ENCODE measurements at regions of chr5 and their contacts with region 1.

Region 1: GRCh38 chr5:150409638-150410523 is 2.8 kb downstream of the CD74 start:
- DNase-seq: peak; percentile 70
- H3K4me3 Mint-ChIP-seq: peak overlapping the region; percentile 98
- H3K27ac Mint-ChIP-seq: peak overlapping the region; percentile 98
- H3K4me1 Mint-ChIP-seq: peaks cover 39% of the 10 kb centered on the region
- H3K27me3 Mint-ChIP-seq: no peaks in the 10 kb centered on the region

Region 2: GRCh38 chr5:149731639-149732323 is 678.1 kb before region 1 on chr5:
- CTCF ChIA-PET with region 1: no interaction called
- intact Hi-C with region 1: loop called (anchors 2 kb)
- DNase-seq: peak; percentile 90
- H3K4me3 Mint-ChIP-seq: peak overlapping the region; percentile 81
- H3K27ac Mint-ChIP-seq: peak overlapping the region; percentile 56
- H3K4me1 Mint-ChIP-seq: peaks cover 4% of the 10 kb centered on the region
- H3K27me3 Mint-ChIP-seq: no peaks in the 10 kb centered on the region

Region 3: GRCh38 chr5:150357326-150358260 is 52.3 kb before region 1 on chr5 and contains the start of gene TCOF1:
- CTCF ChIA-PET with region 1: no interaction called
- intact Hi-C with region 1: loop called (anchors 1 kb)
- DNase-seq: peak; percentile 98
- H3K4me3 Mint-ChIP-seq: peak within 1 kb of the TSS; percentile 87
- H3K27ac Mint-ChIP-seq: peak within 1 kb of the TSS; percentile 82
- H3K4me1 Mint-ChIP-seq: peaks cover 41% of the 10 kb centered on the region
- H3K27me3 Mint-ChIP-seq: no peaks in the 10 kb centered on the region
- total RNA-seq, gene TCOF1: 114 to 115 TPM

Region 4: GRCh38 chr5:150449517-150450339 is 39.8 kb after region 1 on chr5 and contains the start of gene RPS14:
- CTCF ChIA-PET with region 1: interaction called, 3 read pairs
- intact Hi-C with region 1: loop called (anchors 1 kb)
- DNase-seq: peak; percentile 97
- H3K4me3 Mint-ChIP-seq: peak within 1 kb of the TSS; percentile 93
- H3K27ac Mint-ChIP-seq: peak within 1 kb of the TSS; percentile 99
- H3K4me1 Mint-ChIP-seq: peaks cover 33% of the 10 kb centered on the region
- H3K27me3 Mint-ChIP-seq: no peaks in the 10 kb centered on the region
- total RNA-seq, gene RPS14: 4,594 to 4,738 TPM

Region 5: GRCh38 chr5:150774145-150774544 is 364.3 kb after region 1 on chr5:
- CTCF ChIA-PET with region 1: no interaction called
- intact Hi-C with region 1: no loop called
- DNase-seq: no peak
- H3K4me3 Mint-ChIP-seq: no peak overlapping the region
- H3K27ac Mint-ChIP-seq: no peak overlapping the region
- H3K4me1 Mint-ChIP-seq: peaks cover 9% of the 10 kb centered on the region
- H3K27me3 Mint-ChIP-seq: no peaks in the 10 kb centered on the region

Region 6: DNA sequence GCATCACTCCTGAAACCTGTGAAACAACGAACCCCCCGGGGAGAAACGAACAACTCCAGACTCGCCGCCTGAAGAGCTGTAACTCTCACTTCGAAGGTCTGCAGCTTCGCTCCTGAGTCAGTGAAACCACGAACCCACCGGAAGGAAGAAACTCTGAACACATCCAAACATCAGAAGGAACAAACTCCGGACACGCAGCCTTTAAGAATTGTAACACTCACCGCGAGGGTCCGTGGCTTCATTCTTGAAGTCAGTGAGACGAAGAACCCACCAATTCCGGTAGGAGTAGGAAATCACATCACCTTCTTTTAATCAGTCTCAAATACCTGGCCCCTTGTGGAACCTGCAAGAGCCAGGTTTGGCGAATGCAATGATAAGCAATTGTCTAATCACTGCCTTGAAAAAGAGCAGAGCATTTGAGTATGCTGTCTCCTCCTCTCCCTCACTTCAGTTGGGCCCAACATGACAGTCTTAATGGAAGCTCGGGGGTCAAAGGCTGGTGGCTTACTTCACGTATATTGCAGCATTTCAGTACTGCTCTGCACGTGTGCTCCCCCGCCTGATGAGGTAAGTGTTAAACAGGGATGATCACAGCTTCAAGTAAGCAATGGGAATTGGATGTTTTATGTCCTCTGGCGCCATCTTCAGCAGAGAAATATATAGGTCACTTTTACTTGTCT is 436.9 kb after region 1 on chr5:
- CTCF ChIA-PET with region 1: no interaction called
- intact Hi-C with region 1: loop called (anchors 2 kb)
- DNase-seq: peak; percentile 83
- H3K4me3 Mint-ChIP-seq: peak overlapping the region; percentile 79
- H3K27ac Mint-ChIP-seq: peak overlapping the region; percentile 80
- H3K4me1 Mint-ChIP-seq: peaks cover 25% of the 10 kb centered on the region
- H3K27me3 Mint-ChIP-seq: no peaks in the 10 kb centered on the region

Region 7: GRCh38 chr5:151213800-151214613 is 804.1 kb after region 1 on chr5:
- CTCF ChIA-PET with region 1: no interaction called
- intact Hi-C with region 1: loop called (anchors 5 kb)
- DNase-seq: peak; percentile 95
- H3K4me3 Mint-ChIP-seq: peak overlapping the region; percentile 83
- H3K27ac Mint-ChIP-seq: peak overlapping the region; percentile 98
- H3K4me1 Mint-ChIP-seq: peaks cover 76% of the 10 kb centered on the region
- H3K27me3 Mint-ChIP-seq: no peaks in the 10 kb centered on the region

Measured in activated naive CD4-positive, alpha-beta T cell treated with anti-CD3 and anti-CD28 coated beads for 36 hours (primary cell).